ENCODE measurements at regions of chr21 and their contacts with region 1.

Region 1: DNA sequence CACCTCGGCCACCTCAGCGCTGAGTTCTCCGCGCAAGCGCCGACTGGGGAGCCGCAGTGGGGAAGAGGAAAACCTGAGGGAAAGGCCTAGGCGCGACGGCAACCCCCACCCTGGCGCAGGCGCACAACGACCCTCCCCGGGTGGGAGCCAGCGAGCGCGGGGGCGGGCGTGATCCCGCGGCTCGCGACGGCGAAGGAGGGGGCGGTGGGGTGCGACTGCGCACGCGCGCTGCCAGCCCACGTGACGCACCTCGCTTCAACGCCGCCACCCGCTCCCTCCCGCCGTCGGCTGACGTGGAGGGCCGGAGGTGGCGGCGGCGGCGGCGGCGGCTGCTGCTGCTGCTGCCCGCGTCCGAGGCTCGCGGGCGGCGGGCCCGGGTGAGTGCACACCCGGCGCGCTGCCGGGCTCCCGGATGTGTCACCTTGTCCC is at the starts of genes PIGP and TTC3:
- DNase-seq: peak; percentile 97
- ATAC-seq: peak; percentile 74
- H3K4me3 Mint-ChIP-seq: peak within 1 kb of the TSS; percentile 99
- H3K27ac Mint-ChIP-seq: peak within 1 kb of the TSS; percentile 92
- H3K4me1 Mint-ChIP-seq: peaks cover 48% of the 10 kb centered on the region
- H3K27me3 Mint-ChIP-seq: no peaks in the 10 kb centered on the region
- total RNA-seq, gene PIGP: 32.8 to 41.0 TPM
- total RNA-seq, gene TTC3: 65.1 to 78.9 TPM

Region 2: GRCh38 chr21:36060159-36060921 is 1012.7 kb before region 1 on chr21 and contains the start of gene SETD4:
- CTCF ChIA-PET with region 1: no interaction called
- POLR2A ChIA-PET with region 1: no interaction called
- intact Hi-C with region 1: loop called in 1 of 2 experiments (anchors 5 kb)
- DNase-seq: peak; percentile 95
- ATAC-seq: peak; percentile 92
- H3K4me3 Mint-ChIP-seq: peak within 1 kb of the TSS; percentile 89
- H3K27ac Mint-ChIP-seq: peak within 1 kb of the TSS; percentile 92
- H3K4me1 Mint-ChIP-seq: peaks cover 15% of the 10 kb centered on the region
- H3K27me3 Mint-ChIP-seq: no peaks in the 10 kb centered on the region
- total RNA-seq, gene SETD4: 11.0 to 17.6 TPM

Region 3: GRCh38 chr21:36989699-36990507 is 83.1 kb before region 1 on chr21:
- CTCF ChIA-PET with region 1: interaction called, 4 read pairs
- POLR2A ChIA-PET with region 1: no interaction called
- intact Hi-C with region 1: loop called (anchors 1 to 5 kb)
- DNase-seq: peak; percentile 94
- ATAC-seq: peak; percentile 88
- H3K4me3 Mint-ChIP-seq: peak overlapping the region; percentile 71
- H3K27ac Mint-ChIP-seq: peak overlapping the region; percentile 88
- H3K4me1 Mint-ChIP-seq: peaks cover 47% of the 10 kb centered on the region
- H3K27me3 Mint-ChIP-seq: no peaks in the 10 kb centered on the region

Region 4: DNA sequence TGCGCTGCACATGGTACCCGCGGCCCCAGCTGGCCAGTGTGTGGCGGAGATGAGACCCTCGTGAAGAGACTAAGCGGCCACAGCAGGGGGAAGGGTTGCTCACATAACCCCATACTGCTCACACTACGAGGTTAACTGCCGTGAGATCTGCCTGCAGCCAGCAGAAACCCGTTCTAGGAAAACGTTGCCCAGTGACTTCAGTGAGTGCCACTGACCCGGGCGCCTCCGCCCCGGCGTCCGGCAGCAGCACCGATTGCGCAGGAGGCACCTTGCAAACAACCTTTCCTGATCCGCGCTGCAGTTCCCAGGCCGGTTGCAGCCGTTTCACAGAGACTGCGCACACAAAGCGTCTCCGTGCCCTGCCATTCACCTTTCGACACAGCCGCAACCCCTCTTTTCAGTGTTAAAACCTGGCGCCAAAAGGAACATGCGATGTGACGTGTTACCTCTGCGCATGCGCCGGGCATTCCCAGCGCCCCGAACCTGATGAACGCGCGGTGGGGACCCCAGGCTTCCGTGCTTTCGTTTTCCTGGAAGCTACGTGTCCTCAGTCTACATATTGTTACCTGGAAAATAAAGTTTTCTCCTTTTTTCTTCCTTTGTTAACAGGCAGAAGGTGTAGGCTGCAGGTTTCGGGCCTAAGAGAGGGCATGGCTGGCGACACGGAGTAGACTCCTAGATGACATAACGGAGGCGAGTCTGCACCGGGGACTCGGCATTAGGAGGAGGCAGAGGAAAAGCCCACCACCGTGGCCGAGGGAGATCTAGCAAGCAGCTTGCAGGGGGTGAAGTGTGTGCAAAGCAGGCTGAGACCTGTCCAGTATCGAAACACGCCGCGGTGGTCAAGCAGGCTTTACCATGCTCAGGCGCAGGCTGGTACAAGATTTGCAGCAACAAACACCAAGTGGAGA is 185.2 kb after region 1 on chr21:
- CTCF ChIA-PET with region 1: no interaction called
- POLR2A ChIA-PET with region 1: no interaction called
- intact Hi-C with region 1: loop called in 1 of 2 experiments (anchors 2 kb)
- DNase-seq: peak; percentile 92
- ATAC-seq: peak; percentile 87
- H3K4me3 Mint-ChIP-seq: peak overlapping the region; percentile 79
- H3K27ac Mint-ChIP-seq: peak overlapping the region; percentile 93
- H3K4me1 Mint-ChIP-seq: peaks cover 31% of the 10 kb centered on the region
- H3K27me3 Mint-ChIP-seq: no peaks in the 10 kb centered on the region

Region 5: GRCh38 chr21:37435120-37435519 is 362.1 kb after region 1 on chr21:
- CTCF ChIA-PET with region 1: no interaction called
- POLR2A ChIA-PET with region 1: no interaction called
- intact Hi-C with region 1: loop called in 1 of 2 experiments (anchors 10 kb)
- DNase-seq: peak; percentile 55
- ATAC-seq: peak; percentile 94
- H3K4me3 Mint-ChIP-seq: no peak overlapping the region
- H3K27ac Mint-ChIP-seq: no peak overlapping the region
- H3K4me1 Mint-ChIP-seq: peaks cover 41% of the 10 kb centered on the region
- H3K27me3 Mint-ChIP-seq: no peaks in the 10 kb centered on the region